ENCODE measurements at regions of chr18 and their contacts with region 1.

Region 1: GRCh38 chr18:70998490-70998889 is 709.6 kb downstream of the SOCS6 start:
- DNase-seq: peak; percentile 58
- H3K4me3 ChIP-seq: no peak overlapping the region
- H3K27ac ChIP-seq: no peak overlapping the region
- H3K4me1 ChIP-seq: peaks cover 39% of the 10 kb centered on the region
- H3K27me3 ChIP-seq: no peaks in the 10 kb centered on the region
- CTCF ChIP-seq: peak; percentile 27 to 41
- POLR2A ChIP-seq: no peak

Region 2: GRCh38 chr18:70981400-70982140 is 16.9 kb before region 1 on chr18:
- CTCF ChIA-PET with region 1: interaction called, 8 read pairs
- POLR2A ChIA-PET with region 1: no interaction called
- dilution Hi-C with region 1: no loop called
- intact Hi-C with region 1: loop called (anchors 1 kb)
- DNase-seq: peak; percentile 73
- H3K4me3 ChIP-seq: no peak overlapping the region
- H3K27ac ChIP-seq: peak overlapping the region; percentile 69
- H3K4me1 ChIP-seq: peaks cover 14% of the 10 kb centered on the region
- H3K27me3 ChIP-seq: no peaks in the 10 kb centered on the region
- CTCF ChIP-seq: no peak
- POLR2A ChIP-seq: no peak

Region 3: DNA sequence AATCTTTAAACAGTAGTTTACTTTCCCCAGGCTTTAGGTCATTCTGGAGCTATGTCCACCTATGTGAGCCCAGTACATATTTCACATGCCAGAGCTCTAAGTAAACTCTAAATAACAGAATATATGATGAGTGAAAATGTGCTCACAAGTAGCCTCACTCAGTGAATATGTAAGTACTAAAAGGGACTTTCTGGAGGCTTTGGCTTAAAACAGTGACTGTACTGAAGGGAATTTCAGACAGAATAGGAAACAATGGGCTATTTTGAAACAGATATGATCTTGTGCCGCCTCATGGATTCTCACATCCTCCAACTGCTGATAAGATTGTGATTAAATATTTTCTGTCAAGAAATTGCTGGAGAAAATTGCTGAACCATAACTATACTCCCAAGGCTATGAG is 38.3 kb after region 1 on chr18:
- CTCF ChIA-PET with region 1: interaction called, 8 read pairs
- POLR2A ChIA-PET with region 1: interaction called, 4 read pairs
- dilution Hi-C with region 1: no loop called
- intact Hi-C with region 1: loop called (anchors 1 kb)
- DNase-seq: peak; percentile 95
- H3K4me3 ChIP-seq: no peak overlapping the region
- H3K27ac ChIP-seq: peak overlapping the region; percentile 99
- H3K4me1 ChIP-seq: peaks cover 32% of the 10 kb centered on the region
- H3K27me3 ChIP-seq: no peaks in the 10 kb centered on the region
- CTCF ChIP-seq: no peak
- POLR2A ChIP-seq: peak; percentile 55

Region 4: GRCh38 chr18:71116535-71116934 is 118.0 kb after region 1 on chr18:
- CTCF ChIA-PET with region 1: no interaction called
- POLR2A ChIA-PET with region 1: no interaction called
- dilution Hi-C with region 1: no loop called
- intact Hi-C with region 1: loop called (anchors 1 kb)
- DNase-seq: peak; percentile 83
- H3K4me3 ChIP-seq: no peak overlapping the region
- H3K27ac ChIP-seq: peak overlapping the region; percentile 52
- H3K4me1 ChIP-seq: peaks cover 25% of the 10 kb centered on the region
- H3K27me3 ChIP-seq: no peaks in the 10 kb centered on the region
- CTCF ChIP-seq: no peak
- POLR2A ChIP-seq: no peak

Region 5: DNA sequence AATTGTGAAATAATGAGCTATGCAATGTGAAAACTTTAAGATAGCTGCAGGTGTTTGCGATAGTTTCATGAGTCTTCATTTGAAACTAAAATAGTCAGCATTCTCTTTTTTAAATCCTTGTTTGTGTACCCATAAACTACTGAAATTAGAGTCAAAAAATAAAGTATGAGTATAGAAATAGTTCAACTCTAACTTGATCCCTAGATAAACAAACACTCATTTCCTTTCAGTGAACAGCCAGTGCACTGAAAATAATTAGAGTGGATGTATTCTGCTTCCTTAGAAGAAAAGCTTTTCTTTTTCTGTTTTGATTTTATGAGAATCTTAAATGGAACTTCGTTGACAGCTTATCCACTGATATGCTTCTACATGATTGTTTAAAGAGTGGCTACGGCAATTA is 323.7 kb after region 1 on chr18:
- CTCF ChIA-PET with region 1: no interaction called
- POLR2A ChIA-PET with region 1: interaction called, 4 read pairs
- dilution Hi-C with region 1: no loop called
- intact Hi-C with region 1: loop called (anchors 5 kb)
- DNase-seq: peak; percentile 68
- H3K4me3 ChIP-seq: no peak overlapping the region
- H3K27ac ChIP-seq: peak overlapping the region; percentile 16
- H3K4me1 ChIP-seq: peaks cover 24% of the 10 kb centered on the region
- H3K27me3 ChIP-seq: no peaks in the 10 kb centered on the region
- CTCF ChIP-seq: no peak
- POLR2A ChIP-seq: no peak

Region 6: GRCh38 chr18:71784777-71785176 is 786.3 kb after region 1 on chr18:
- CTCF ChIA-PET with region 1: interaction called, 4 read pairs
- POLR2A ChIA-PET with region 1: no interaction called
- dilution Hi-C with region 1: no loop called
- intact Hi-C with region 1: loop called (anchors 5 kb)
- DNase-seq: peak; percentile 51
- H3K4me3 ChIP-seq: no peak overlapping the region
- H3K27ac ChIP-seq: no peak overlapping the region
- H3K4me1 ChIP-seq: no peaks in the 10 kb centered on the region
- H3K27me3 ChIP-seq: no peaks in the 10 kb centered on the region
- CTCF ChIP-seq: peak; percentile 41 to 62
- POLR2A ChIP-seq: no peak